ENCODE measurements at regions of chr16 and their contacts with region 1.

Region 1: GRCh38 chr16:86680162-86680561 is 101.8 kb downstream of the FOXL1 start:
- DNase-seq: peak; percentile 96
- H3K4me3 ChIP-seq: peak overlapping the region in 1 of 3 experiments; percentile 37
- H3K27ac ChIP-seq: peak overlapping the region; percentile 99
- H3K4me1 ChIP-seq: peaks cover 42% of the 10 kb centered on the region
- H3K27me3 ChIP-seq: no peaks in the 10 kb centered on the region
- CTCF ChIP-seq: no peak
- POLR2A ChIP-seq: peak; percentile 51

Region 2: GRCh38 chr16:86570558-86571529 is 109.3 kb before region 1 on chr16:
- CTCF ChIA-PET with region 1: interaction called, 16 read pairs
- POLR2A ChIA-PET with region 1: no interaction called
- dilution Hi-C with region 1: no loop called
- intact Hi-C with region 1: loop called (anchors 1 kb)
- DNase-seq: peak; percentile 57
- H3K4me3 ChIP-seq: peak overlapping the region; percentile 88 to 99 (median 94)
- H3K27ac ChIP-seq: peak overlapping the region; percentile 78
- H3K4me1 ChIP-seq: peaks cover 35% of the 10 kb centered on the region
- H3K27me3 ChIP-seq: no peaks in the 10 kb centered on the region
- CTCF ChIP-seq: no peak
- POLR2A ChIP-seq: no peak

Region 3: GRCh38 chr16:86664533-86665318 is 15.4 kb before region 1 on chr16:
- CTCF ChIA-PET with region 1: interaction called, 20 read pairs
- POLR2A ChIA-PET with region 1: interaction called, 10 read pairs
- dilution Hi-C with region 1: no loop called
- intact Hi-C with region 1: loop called (anchors 1 kb)
- DNase-seq: peak; percentile 94
- H3K4me3 ChIP-seq: no peak overlapping the region
- H3K27ac ChIP-seq: peak overlapping the region; percentile 95
- H3K4me1 ChIP-seq: peaks cover 60% of the 10 kb centered on the region
- H3K27me3 ChIP-seq: no peaks in the 10 kb centered on the region
- CTCF ChIP-seq: no peak
- POLR2A ChIP-seq: no peak

Region 4: GRCh38 chr16:86761111-86762031 is 81.2 kb after region 1 on chr16:
- CTCF ChIA-PET with region 1: interaction called, 7 read pairs
- POLR2A ChIA-PET with region 1: no interaction called
- dilution Hi-C with region 1: no loop called
- intact Hi-C with region 1: loop called (anchors 2 kb)
- DNase-seq: peak; percentile 72
- H3K4me3 ChIP-seq: no peak overlapping the region
- H3K27ac ChIP-seq: no peak overlapping the region
- H3K4me1 ChIP-seq: peaks cover 13% of the 10 kb centered on the region
- H3K27me3 ChIP-seq: peaks cover 0 to 8% of the 10 kb centered on the region in 2 experiments
- CTCF ChIP-seq: peak; percentile 91 to 96
- POLR2A ChIP-seq: no peak

Region 5: GRCh38 chr16:86789621-86790051 is 109.5 kb after region 1 on chr16:
- CTCF ChIA-PET with region 1: no interaction called
- POLR2A ChIA-PET with region 1: no interaction called
- dilution Hi-C with region 1: no loop called
- intact Hi-C with region 1: no loop called
- DNase-seq: no peak
- H3K4me3 ChIP-seq: no peak overlapping the region
- H3K27ac ChIP-seq: no peak overlapping the region
- H3K4me1 ChIP-seq: peaks cover 6% of the 10 kb centered on the region
- H3K27me3 ChIP-seq: peaks cover 0 to 6% of the 10 kb centered on the region in 2 experiments
- CTCF ChIP-seq: no peak
- POLR2A ChIP-seq: no peak

Region 6: DNA sequence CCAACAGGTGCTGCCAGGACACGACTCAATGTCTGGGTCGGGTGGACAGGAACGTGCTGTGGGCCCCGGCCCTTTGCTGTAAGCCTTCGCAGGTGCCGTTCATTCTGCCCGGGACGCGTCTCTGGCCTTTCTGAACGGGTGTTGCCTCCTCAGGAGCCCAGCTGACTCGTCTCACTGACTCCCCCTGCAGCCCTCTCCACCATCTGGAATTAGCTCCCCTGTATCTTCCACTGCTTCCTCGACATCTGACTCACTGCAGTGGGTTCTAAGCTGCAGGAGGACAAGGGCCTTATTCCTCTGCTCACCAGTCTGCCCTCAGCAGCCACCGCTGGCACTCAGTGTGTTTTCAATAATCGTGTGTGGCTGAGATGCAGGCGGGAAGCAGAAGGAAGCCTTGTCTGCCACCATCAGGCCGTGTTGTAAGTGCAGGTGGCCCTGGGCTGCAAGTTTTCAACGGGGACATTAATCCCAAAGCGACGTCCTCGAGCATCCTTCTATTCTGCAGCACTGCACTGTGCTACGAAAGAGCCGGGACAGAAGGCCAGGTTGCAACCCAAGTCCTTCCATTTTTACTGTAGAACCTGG is 154.4 kb after region 1 on chr16:
- CTCF ChIA-PET with region 1: interaction called, 3 read pairs
- POLR2A ChIA-PET with region 1: no interaction called
- dilution Hi-C with region 1: no loop called
- intact Hi-C with region 1: loop called (anchors 1 kb)
- DNase-seq: peak; percentile 41
- H3K4me3 ChIP-seq: no peak overlapping the region
- H3K27ac ChIP-seq: no peak overlapping the region
- H3K4me1 ChIP-seq: peaks cover 7% of the 10 kb centered on the region
- H3K27me3 ChIP-seq: no peaks in the 10 kb centered on the region
- CTCF ChIP-seq: peak in 1 of 2 donors; percentile 29
- POLR2A ChIP-seq: no peak

Measured in endothelial cell of umbilical vein (primary cell).